Right ventricle myocardium inferior (tissue), 1 donor: ENCODE measurements at regions of chr3 and their contacts with region 1.

Region 1: DNA sequence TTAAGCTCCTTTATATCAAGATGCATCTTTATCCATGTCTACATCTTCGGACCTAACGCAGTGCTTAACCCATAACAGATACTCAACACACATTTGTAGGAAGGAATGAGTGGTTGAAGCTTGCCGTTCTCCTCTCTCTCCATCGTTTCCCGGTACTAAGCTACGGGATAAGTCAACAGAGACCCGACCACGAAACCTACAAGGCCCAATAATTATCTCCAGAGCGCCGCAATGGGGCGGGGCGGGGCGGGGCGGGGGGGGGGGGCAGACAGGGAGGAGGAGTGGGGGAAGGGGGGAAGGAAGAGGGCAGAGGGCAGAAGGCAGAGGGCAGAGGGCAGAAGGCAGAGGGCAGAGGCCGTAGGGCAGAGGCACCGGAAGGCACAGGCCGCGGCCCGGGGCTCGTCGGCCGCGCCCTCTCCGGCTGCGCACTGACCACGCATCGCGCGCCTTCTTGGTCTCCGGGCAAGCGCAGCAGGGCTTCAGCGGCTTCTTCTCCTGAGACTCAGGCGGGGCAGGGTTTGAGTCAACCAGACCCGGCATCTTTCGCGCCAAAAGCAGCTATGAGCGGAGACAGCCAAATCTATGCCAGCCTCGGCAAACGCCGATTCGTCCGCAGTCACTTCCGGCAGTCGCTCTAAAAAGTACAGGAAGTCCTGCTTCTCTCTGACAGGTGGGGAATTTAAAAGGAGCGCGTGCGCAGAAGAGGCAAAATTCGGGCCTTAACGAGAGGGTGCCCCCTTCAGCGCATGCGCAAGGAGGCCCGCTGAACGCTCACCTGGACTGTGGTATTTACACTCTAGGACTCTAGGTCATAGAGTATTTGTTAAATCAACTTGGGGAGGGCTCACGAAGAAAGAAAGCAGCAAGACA is at the start of gene COX17:
- DNase-seq: peak; percentile 94
- ATAC-seq: peak; percentile 90
- total RNA-seq, gene COX17: 167 TPM

Region 2: DNA sequence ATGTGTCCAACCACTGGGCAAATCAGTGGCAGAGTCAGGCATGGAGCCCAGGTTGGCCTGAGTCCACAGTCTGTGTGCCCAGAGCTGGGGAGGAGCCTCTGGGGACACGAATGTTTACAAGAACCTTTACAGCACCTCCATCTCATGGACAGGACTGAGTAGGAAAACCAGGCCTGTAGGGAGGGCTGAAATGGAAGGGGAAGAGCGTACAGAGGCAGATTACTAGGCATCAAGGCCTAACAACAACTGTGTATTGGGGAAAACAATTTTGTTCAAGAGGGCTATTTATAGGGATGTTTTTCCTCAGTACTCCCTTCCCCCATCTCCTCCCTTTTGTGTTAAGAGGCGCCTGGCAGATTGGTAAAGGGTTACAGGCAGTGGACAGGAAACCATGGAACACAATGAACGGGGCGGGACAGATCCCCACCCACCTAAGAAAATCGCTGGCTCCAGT is 397.9 kb before region 1 on chr3:
- intact Hi-C with region 1: loop called (anchors 10 kb)
- DNase-seq: peak; percentile 79
- ATAC-seq: peak; percentile 83

Region 3: GRCh38 chr3:119463171-119464169 is 213.5 kb before region 1 on chr3 and contains the start of gene TMEM39A:
- intact Hi-C with region 1: loop called (anchors 1 kb)
- DNase-seq: peak; percentile 100
- ATAC-seq: peak; percentile 99
- total RNA-seq, gene TMEM39A: 17.0 TPM

Region 4: DNA sequence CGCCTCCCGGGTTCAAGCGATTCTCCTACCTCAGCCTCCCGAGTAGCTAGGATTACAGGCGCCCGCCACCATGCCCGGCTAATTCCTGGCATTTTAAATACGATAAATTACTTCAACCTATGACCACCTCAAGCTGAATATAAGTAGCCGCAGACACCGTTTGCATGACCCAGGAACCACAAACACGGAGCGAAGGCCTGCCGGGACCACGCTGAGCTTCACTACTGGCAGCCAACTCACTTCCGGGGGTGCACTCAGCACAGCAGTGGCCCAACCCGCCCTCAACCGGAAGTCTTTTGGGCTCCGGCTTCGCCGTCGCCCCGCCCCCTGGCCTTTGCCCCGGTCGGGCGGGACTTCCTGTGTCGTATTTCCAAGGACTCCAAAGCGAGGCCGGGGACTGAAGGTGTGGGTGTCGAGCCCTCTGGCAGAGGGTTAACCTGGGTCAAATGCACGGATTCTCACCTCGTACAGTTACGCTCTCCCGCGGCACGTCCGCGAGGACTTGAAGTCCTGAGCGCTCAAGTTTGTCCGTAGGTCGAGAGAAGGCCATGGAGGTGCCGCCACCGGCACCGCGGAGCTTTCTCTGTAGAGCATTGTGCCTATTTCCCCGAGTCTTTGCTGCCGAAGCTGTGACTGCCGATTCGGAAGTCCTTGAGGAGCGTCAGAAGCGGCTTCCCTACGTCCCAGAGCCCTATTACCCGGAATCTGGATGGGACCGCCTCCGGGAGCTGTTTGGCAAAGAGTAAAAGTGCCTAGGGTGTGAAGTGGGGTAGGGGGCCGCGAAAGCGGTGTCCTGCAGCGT is 178.6 kb before region 1 on chr3 and contains the start of gene TIMMDC1:
- intact Hi-C with region 1: loop called (anchors 5 kb)
- DNase-seq: peak; percentile 97
- ATAC-seq: peak; percentile 100
- total RNA-seq, gene TIMMDC1: 340 TPM

Region 5: GRCh38 chr3:119579366-119580165 is 97.4 kb before region 1 on chr3 and contains the start of gene ADPRH:
- intact Hi-C with region 1: loop called (anchors 2 kb)
- DNase-seq: peak; percentile 92
- ATAC-seq: peak; percentile 94
- total RNA-seq, gene ADPRH: 10.1 TPM

Region 6: GRCh38 chr3:119637679-119638525 is 39.1 kb before region 1 on chr3:
- intact Hi-C with region 1: loop called (anchors 5 kb)
- DNase-seq: no peak
- ATAC-seq: peak; percentile 11